WTC11 (cell line): ENCODE measurements at regions of chr3 and their contacts with region 1.

Region 1: DNA sequence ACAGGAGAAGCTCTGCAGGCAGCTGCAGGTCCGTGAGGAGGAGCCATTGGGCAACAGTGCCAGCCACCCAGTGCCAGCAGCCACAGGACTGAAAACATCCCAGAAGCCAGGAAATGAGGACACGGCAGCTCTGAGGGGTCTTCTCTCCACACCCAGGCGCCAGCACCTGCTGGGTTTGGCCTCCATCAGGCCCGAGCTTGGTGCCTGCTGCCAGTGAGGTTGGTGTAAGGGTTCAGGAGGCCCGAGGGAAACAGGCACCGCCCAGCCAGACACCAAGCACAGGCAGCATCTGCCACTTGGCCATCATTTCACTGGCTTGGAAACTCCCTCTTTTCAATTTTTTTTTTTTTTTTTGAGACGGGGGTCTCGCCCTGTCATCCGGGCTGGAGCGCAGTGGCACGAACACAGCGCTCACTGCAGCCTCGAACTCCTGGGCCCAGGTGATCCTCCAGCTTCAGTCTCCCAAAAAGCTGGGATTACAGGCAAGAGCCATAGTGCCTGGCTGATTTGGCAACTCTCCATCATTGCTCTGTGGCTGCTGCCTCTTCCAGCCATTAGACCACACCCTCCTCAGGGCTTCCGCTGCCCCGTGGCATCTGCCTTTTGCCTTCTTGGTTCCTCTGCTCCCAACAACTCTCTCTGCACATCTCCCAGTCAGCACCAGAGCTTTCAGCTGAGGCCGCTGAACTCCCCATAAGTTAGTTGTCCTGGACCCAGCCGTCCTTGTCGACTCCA is 1.5 kb upstream of the ITIH3 start:
- DNase-seq: no peak
- ATAC-seq: no peak
- H3K4me3 Mint-ChIP-seq: no peak overlapping the region
- H3K27ac Mint-ChIP-seq: no peak overlapping the region
- H3K4me1 Mint-ChIP-seq: no peaks in the 10 kb centered on the region
- H3K27me3 Mint-ChIP-seq: no peaks in the 10 kb centered on the region
- CTCF ChIP-seq: no peak

Region 2: GRCh38 chr3:52714335-52715302 is 78.5 kb before region 1 on chr3:
- CTCF ChIA-PET with region 1: interaction called, 18 read pairs
- POLR2A ChIA-PET with region 1: no interaction called
- DNase-seq: peak; percentile 96
- ATAC-seq: peak; percentile 96
- H3K4me3 Mint-ChIP-seq: peak overlapping the region; percentile 68
- H3K27ac Mint-ChIP-seq: no peak overlapping the region
- H3K4me1 Mint-ChIP-seq: peaks cover 7% of the 10 kb centered on the region
- H3K27me3 Mint-ChIP-seq: no peaks in the 10 kb centered on the region
- CTCF ChIP-seq: no peak

Region 3: DNA sequence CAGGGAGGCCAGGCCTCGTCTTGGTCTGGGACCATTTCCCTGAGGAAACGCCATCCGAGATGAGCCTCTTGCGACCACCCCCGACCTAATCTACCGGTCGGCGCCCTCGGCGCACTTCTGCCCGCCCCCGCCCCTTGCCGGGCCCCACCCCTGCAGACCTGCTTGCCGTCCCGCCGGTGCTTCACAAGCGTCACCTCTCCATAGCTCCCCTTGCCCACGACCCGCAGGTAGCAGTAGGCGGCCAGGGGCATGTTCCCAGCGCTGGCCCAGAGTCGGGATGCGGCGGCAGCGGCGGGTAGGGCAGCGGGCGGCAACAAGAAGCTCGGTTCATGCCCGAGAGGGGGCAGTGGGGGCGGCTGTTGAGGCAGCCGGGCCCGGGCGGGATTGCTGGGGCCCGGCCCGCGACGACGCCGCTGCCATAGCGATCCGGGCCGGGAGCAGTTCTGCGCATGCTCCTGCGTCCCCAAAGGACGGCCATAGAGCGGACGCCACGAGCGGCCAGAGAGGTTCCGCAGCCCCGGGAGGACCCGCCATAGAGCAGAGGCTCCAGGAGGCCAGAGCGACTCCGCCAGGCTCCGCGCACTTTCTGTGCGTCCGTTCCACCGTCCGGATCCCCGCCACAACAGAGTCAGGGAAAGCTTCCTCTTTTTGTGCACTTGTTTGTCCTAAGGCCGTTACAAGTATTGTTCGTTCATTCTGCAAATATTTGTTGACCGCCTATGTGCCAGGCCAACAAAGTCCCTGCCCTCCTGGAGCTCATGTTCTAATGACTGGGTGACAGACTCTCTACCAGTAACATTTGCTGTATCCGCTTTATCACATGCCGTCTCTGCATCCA is 22.4 kb before region 1 on chr3 and contains the start of gene NEK4:
- CTCF ChIA-PET with region 1: interaction called, 46 read pairs
- POLR2A ChIA-PET with region 1: no interaction called
- DNase-seq: peak; percentile 95
- ATAC-seq: peak; percentile 96
- H3K4me3 Mint-ChIP-seq: peak within 1 kb of the TSS; percentile 90
- H3K27ac Mint-ChIP-seq: peak within 1 kb of the TSS; percentile 95
- H3K4me1 Mint-ChIP-seq: peaks cover 6% of the 10 kb centered on the region
- H3K27me3 Mint-ChIP-seq: no peaks in the 10 kb centered on the region
- CTCF ChIP-seq: no peak
- total RNA-seq, gene NEK4: 30.3 to 31.4 TPM (median 31.2 TPM) in 3 replicates

Region 4: GRCh38 chr3:52779011-52779836 is 13.9 kb before region 1 on chr3:
- CTCF ChIA-PET with region 1: interaction called, 27 read pairs
- POLR2A ChIA-PET with region 1: interaction called, 3 read pairs
- DNase-seq: peak; percentile 3
- ATAC-seq: no peak
- H3K4me3 Mint-ChIP-seq: no peak overlapping the region
- H3K27ac Mint-ChIP-seq: no peak overlapping the region
- H3K4me1 Mint-ChIP-seq: peaks cover 13% of the 10 kb centered on the region
- H3K27me3 Mint-ChIP-seq: no peaks in the 10 kb centered on the region
- CTCF ChIP-seq: no peak

Region 5: GRCh38 chr3:52809662-52810377 is 16.7 kb after region 1 on chr3:
- CTCF ChIA-PET with region 1: interaction called, 28 read pairs
- POLR2A ChIA-PET with region 1: no interaction called
- DNase-seq: no peak
- ATAC-seq: no peak
- H3K4me3 Mint-ChIP-seq: no peak overlapping the region
- H3K27ac Mint-ChIP-seq: no peak overlapping the region
- H3K4me1 Mint-ChIP-seq: no peaks in the 10 kb centered on the region
- H3K27me3 Mint-ChIP-seq: peaks cover 3% of the 10 kb centered on the region; the same call in 1 of the 2 replicates
- CTCF ChIP-seq: no peak

Region 6: GRCh38 chr3:52845691-52846431 is 52.7 kb after region 1 on chr3:
- CTCF ChIA-PET with region 1: interaction called, 10 read pairs
- POLR2A ChIA-PET with region 1: no interaction called
- DNase-seq: peak; percentile 47
- ATAC-seq: peak; percentile 67
- H3K4me3 Mint-ChIP-seq: no peak overlapping the region
- H3K27ac Mint-ChIP-seq: no peak overlapping the region
- H3K4me1 Mint-ChIP-seq: peaks cover 3% of the 10 kb centered on the region; the same call in 1 of the 2 replicates
- H3K27me3 Mint-ChIP-seq: no peaks in the 10 kb centered on the region
- CTCF ChIP-seq: peak; percentile 45